Activated naive CD4-positive, alpha-beta T cell treated with anti-CD3 and anti-CD28 coated beads for 36 hours (primary cell): ENCODE measurements at regions of chr3 and their contacts with region 1.

Region 1: GRCh38 chr3:118943597-118943996 is 91.0 kb downstream of the IGSF11 start:
- DNase-seq: no peak
- H3K4me3 Mint-ChIP-seq: no peak overlapping the region
- H3K27ac Mint-ChIP-seq: no peak overlapping the region
- H3K4me1 Mint-ChIP-seq: peaks cover 45% of the 10 kb centered on the region
- H3K27me3 Mint-ChIP-seq: no peaks in the 10 kb centered on the region

Region 2: GRCh38 chr3:118955914-118956556 is 12.4 kb after region 1 on chr3:
- CTCF ChIA-PET with region 1: no interaction called
- intact Hi-C with region 1: loop called (anchors 1 kb)
- DNase-seq: no peak
- H3K4me3 Mint-ChIP-seq: no peak overlapping the region
- H3K27ac Mint-ChIP-seq: peak overlapping the region; percentile 78
- H3K4me1 Mint-ChIP-seq: peaks cover 43% of the 10 kb centered on the region
- H3K27me3 Mint-ChIP-seq: no peaks in the 10 kb centered on the region

Region 3: GRCh38 chr3:119098619-119099222 is 155.1 kb after region 1 on chr3:
- CTCF ChIA-PET with region 1: no interaction called
- intact Hi-C with region 1: loop called (anchors 2 kb)
- DNase-seq: no peak
- H3K4me3 Mint-ChIP-seq: no peak overlapping the region
- H3K27ac Mint-ChIP-seq: no peak overlapping the region
- H3K4me1 Mint-ChIP-seq: no peaks in the 10 kb centered on the region
- H3K27me3 Mint-ChIP-seq: no peaks in the 10 kb centered on the region